ENCODE measurements at regions of chr12 and their contacts with region 1.

Region 1: DNA sequence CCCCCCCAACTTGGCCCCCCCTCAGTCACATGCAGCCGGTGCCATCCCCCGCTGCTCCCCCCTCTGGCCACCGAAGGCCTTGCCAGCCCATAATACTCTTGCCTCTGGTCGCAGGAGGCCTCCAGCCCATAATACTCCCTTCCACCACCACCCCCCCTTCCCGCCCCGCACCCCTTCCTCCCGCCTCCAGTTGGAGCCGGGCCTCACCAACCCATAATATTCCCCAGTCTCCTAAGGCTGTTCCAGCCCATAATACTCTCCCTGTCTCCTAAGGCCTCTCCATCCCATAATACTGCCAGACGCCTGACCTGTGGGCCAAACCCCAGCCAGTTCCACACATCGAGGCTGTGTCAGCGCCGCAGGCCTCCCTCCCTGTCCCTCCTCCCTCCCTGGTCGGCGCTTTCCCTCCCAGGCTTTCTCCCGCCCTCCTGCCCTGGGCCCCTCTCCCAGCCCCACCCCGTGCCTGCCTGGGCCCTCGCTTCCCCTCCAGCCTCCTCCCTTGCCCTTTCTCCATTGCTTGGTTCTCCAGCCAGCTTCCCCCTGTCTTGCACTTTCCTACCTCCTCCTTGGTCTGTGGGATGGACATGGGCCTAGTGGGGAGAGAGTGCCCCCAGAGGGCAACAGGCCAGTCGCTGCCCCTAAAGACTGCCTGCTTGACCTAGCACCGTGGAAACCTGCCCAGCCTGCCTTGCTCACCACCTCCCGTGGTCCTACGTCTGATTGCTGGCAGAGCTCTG is 6.8 kb upstream of the CHD4 start:
- DNase-seq: peak; percentile 80 to 92
- H3K4me3 ChIP-seq: no peak overlapping the region
- H3K4me3 Mint-ChIP-seq: no peak overlapping the region
- H3K27ac Mint-ChIP-seq: peak overlapping the region; percentile 20
- H3K4me1 ChIP-seq: peaks cover 23% of the 10 kb centered on the region
- H3K4me1 Mint-ChIP-seq: peaks cover 7% of the 10 kb centered on the region
- H3K27me3 ChIP-seq: no peaks in the 10 kb centered on the region
- H3K27me3 Mint-ChIP-seq: no peaks in the 10 kb centered on the region
- CTCF ChIP-seq: peak in 1 of 2 experiments; percentile 21

Region 2: GRCh38 chr12:6267139-6267721 is 346.7 kb before region 1 on chr12:
- CTCF ChIA-PET with region 1: no interaction called
- POLR2A ChIA-PET with region 1: no interaction called
- intact Hi-C with region 1: no loop called
- DNase-seq: no peak
- H3K4me3 ChIP-seq: no peak overlapping the region
- H3K4me3 Mint-ChIP-seq: no peak overlapping the region
- H3K27ac Mint-ChIP-seq: no peak overlapping the region
- H3K4me1 ChIP-seq: peaks cover 17% of the 10 kb centered on the region
- H3K4me1 Mint-ChIP-seq: peaks cover 22% of the 10 kb centered on the region
- H3K27me3 ChIP-seq: no peaks in the 10 kb centered on the region
- H3K27me3 Mint-ChIP-seq: no peaks in the 10 kb centered on the region
- CTCF ChIP-seq: no peak

Region 3: DNA sequence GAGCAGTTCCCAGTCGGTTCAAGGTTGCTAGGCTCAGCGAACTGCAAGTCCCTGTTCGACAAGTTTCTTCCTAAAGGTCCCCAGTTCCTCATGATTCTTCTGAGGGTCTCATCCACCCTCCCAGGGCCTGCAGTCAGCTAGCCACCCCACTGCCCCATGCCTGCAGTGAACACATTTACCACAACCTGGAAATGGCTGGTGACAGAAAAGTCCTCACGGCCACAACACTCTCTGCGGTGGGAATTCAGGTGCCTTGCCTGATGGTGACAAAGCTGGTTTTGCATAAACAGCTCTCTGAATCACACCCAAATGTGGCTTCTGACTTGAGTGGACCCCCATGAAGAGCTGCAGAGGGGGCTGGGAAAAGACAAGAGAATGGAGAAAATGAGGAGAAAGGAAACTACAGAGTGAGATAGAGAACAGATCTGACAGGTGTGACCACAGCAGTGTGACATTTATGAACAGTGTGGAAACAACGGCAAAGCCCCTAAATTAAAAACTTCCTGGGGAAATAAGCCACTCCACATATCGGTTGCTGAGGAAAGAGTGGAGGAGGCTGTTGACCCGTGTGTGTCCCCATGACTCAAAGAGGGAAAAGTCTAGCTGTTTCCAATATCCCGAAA is 170.5 kb before region 1 on chr12:
- CTCF ChIA-PET with region 1: no interaction called
- POLR2A ChIA-PET with region 1: no interaction called
- intact Hi-C with region 1: no loop called
- DNase-seq: no peak
- H3K4me3 ChIP-seq: no peak overlapping the region
- H3K4me3 Mint-ChIP-seq: no peak overlapping the region
- H3K27ac Mint-ChIP-seq: no peak overlapping the region
- H3K4me1 ChIP-seq: no peaks in the 10 kb centered on the region
- H3K4me1 Mint-ChIP-seq: no peaks in the 10 kb centered on the region
- H3K27me3 ChIP-seq: no peaks in the 10 kb centered on the region
- H3K27me3 Mint-ChIP-seq: no peaks in the 10 kb centered on the region
- CTCF ChIP-seq: no peak

Region 4: DNA sequence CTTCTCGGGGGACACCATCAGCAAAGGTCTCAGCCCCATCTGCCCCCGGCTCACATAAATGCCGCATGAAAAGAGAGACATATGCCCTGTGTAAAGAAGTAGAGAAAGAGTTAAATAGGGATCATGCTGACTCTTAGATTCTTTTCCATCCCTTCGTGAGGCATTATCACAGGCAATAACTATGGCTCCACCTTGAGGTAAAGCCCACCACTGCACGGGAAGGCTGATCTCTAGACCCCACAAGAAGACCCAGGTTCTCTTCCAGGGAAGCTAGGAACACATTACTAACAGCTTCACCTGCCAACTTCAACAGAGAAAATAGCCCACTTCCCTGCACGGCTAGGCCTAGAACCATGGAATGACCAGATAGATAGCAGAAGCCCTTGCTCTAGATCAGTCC is 31.7 kb before region 1 on chr12:
- CTCF ChIA-PET with region 1: interaction called, 11 read pairs
- POLR2A ChIA-PET with region 1: no interaction called
- intact Hi-C with region 1: no loop called
- DNase-seq: peak in 1 of 2 experiments; percentile 43
- H3K4me3 ChIP-seq: no peak overlapping the region
- H3K4me3 Mint-ChIP-seq: no peak overlapping the region
- H3K27ac Mint-ChIP-seq: no peak overlapping the region
- H3K4me1 ChIP-seq: no peaks in the 10 kb centered on the region
- H3K4me1 Mint-ChIP-seq: no peaks in the 10 kb centered on the region
- H3K27me3 ChIP-seq: no peaks in the 10 kb centered on the region
- H3K27me3 Mint-ChIP-seq: no peaks in the 10 kb centered on the region
- CTCF ChIP-seq: peak in 1 of 2 experiments; percentile 63

Region 5: DNA sequence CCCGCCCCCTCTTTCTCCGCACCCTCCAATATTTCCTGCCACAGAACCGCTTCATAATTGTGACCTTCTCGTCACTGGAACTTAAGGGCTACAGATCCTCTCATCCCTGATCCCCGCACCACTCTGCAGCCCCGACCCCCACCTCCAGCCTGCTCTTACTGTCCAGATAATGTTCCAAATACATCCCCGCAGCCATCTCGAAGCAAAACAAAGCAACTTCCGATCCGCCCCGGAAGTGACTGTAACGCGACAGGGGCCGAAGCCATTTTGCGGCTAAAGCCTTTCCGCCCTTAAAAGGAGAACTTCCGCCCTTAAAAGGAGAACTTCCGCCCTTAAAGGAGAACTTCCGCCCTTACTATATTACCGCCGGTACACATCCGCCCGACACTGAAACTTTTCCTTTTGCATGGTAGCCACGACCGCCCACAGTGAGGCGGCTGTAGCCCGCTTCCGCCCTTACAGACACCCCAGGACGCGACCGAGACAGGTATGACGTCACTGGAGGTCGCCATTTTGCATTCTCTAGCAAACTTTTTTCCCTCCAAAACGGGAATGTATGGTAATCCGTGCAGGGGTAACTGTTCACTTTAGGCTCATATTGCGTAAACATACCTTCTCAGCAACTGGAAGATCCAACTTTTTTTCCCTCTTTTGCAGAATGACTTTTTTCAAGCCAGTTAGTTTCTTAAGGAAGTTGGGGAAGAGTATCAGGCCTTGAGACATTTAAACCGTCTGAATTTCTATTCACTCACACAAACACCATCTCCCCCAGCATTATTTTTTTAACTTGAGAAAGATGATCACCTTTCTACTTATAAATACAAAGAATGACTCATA is 49.2 kb after region 1 on chr12 and contains the start of gene ING4:
- CTCF ChIA-PET with region 1: interaction called, 4 read pairs
- POLR2A ChIA-PET with region 1: no interaction called
- intact Hi-C with region 1: loop called (anchors 1 kb)
- DNase-seq: peak; percentile 99 to 100
- H3K4me3 ChIP-seq: peak within 1 kb of the TSS; percentile 60
- H3K4me3 Mint-ChIP-seq: peak within 1 kb of the TSS; percentile 79
- H3K27ac Mint-ChIP-seq: peak within 1 kb of the TSS; percentile 83
- H3K4me1 ChIP-seq: peaks cover 12% of the 10 kb centered on the region; the same call in 1 of the 2 replicates
- H3K4me1 Mint-ChIP-seq: peaks cover 14% of the 10 kb centered on the region
- H3K27me3 ChIP-seq: no peaks in the 10 kb centered on the region
- H3K27me3 Mint-ChIP-seq: no peaks in the 10 kb centered on the region
- CTCF ChIP-seq: peak in 1 of 2 experiments; percentile 0
- total RNA-seq, gene ING4: 31.6 and 32.8 TPM in 2 replicates

Region 6: DNA sequence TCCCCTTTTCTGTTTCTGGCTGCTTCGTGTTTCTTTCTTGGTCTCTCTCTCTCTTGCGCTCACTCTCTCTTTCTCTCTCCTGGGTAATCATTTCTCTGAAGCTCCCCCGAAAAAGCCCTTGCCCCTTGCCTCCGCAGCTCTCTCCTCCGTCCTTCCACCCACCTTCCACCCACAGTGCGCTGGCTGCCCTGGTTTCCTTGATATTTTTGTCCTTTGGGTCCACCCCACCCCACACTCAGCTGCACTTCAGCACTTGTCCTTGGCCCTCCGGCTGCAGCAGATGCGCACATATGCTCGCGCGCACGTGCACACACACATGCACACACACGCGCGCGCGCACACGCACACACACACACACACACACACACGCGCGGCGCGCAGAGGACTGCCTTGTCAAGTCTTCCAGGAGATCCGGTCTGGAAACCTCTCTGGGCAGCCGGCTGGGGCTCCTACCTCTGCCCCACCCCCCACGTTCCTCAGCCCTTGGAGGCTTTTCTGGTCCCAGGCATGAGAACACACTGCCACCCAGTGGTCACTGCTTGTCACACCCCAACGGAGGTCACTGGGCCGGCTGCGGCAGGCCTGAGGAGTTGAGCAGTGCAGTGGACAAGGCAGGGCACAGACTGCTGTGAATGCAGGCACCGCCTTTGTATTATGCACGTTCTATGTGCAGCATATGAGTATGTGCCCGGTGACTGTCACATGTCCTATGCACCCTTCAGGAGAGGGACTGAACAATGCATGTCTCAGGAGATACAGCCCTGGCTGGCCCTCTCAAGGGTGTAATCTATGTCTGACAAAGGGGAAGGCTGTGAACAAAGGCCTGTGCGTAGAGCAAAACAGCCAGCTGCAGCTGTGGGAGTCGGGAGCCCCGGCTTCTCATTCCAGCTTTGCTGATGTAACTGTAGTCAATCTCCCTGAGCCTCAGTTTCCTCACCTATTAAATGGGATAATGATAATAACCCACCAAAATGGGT is 164.9 kb after region 1 on chr12:
- CTCF ChIA-PET with region 1: no interaction called
- POLR2A ChIA-PET with region 1: no interaction called
- intact Hi-C with region 1: loop called (anchors 2 kb)
- DNase-seq: peak; percentile 98 to 99
- H3K4me3 ChIP-seq: peak overlapping the region; percentile 44
- H3K4me3 Mint-ChIP-seq: peak overlapping the region; percentile 81
- H3K27ac Mint-ChIP-seq: peak overlapping the region; percentile 58
- H3K4me1 ChIP-seq: peaks cover 31% of the 10 kb centered on the region
- H3K4me1 Mint-ChIP-seq: peaks cover 43% of the 10 kb centered on the region
- H3K27me3 ChIP-seq: no peaks in the 10 kb centered on the region
- H3K27me3 Mint-ChIP-seq: no peaks in the 10 kb centered on the region
- CTCF ChIP-seq: peak; percentile 99

Measured in Caco-2 (cell line).